Activated CD4-positive, alpha-beta T cell treated with anti-CD3 and anti-CD28 coated beads for 36 hours (primary cell): ENCODE measurements at regions of chr2 and their contacts with region 1.

Region 1: DNA sequence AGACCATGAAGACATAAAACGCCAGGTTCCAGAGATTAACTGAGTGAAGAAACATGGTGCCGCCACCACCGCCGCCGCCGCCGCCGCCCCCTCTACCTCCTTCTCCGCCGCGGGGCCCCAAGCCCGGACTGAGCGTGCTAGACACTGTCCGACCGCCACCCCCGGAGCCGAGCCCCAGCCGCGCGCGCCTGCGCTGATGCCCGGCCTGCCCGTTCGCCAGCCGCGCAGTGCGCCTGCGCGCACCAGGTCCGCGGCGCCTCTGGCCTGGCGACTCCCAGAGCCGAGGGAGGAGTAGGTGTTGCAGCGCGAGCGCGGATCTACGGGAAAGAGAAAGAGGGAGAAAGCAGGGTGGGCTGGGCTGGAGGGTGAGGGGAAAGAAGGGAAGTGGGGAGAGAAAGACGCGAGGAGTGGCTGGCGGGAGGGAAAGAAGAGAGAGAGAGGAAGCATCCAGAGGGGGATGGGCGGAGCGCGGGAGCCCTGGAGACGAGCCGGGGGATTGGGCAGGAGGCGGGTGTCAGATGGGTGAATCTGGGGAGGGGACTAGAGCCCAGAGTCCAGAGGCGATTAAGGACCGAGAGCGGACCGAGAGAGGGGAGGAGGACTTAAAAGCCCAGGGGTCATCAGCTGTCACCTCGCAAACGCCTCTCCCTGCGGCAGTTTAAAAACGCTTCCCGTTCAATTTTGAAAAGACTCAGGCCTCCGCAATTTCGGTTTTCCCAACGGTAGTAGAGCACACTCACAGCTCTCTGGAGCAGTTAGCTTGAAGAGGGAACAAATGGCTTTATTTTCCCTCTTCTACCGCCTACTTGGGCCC is at the start of gene PGAP1:
- DNase-seq: peak; percentile 94
- ATAC-seq: peak; percentile 80
- H3K4me3 Mint-ChIP-seq: peak within 1 kb of the TSS; percentile 92
- H3K27ac Mint-ChIP-seq: peak within 1 kb of the TSS; percentile 99
- H3K4me1 Mint-ChIP-seq: peaks cover 31% of the 10 kb centered on the region
- H3K27me3 Mint-ChIP-seq: no peaks in the 10 kb centered on the region
- total RNA-seq, gene PGAP1: 22.2 to 25.1 TPM

Region 2: DNA sequence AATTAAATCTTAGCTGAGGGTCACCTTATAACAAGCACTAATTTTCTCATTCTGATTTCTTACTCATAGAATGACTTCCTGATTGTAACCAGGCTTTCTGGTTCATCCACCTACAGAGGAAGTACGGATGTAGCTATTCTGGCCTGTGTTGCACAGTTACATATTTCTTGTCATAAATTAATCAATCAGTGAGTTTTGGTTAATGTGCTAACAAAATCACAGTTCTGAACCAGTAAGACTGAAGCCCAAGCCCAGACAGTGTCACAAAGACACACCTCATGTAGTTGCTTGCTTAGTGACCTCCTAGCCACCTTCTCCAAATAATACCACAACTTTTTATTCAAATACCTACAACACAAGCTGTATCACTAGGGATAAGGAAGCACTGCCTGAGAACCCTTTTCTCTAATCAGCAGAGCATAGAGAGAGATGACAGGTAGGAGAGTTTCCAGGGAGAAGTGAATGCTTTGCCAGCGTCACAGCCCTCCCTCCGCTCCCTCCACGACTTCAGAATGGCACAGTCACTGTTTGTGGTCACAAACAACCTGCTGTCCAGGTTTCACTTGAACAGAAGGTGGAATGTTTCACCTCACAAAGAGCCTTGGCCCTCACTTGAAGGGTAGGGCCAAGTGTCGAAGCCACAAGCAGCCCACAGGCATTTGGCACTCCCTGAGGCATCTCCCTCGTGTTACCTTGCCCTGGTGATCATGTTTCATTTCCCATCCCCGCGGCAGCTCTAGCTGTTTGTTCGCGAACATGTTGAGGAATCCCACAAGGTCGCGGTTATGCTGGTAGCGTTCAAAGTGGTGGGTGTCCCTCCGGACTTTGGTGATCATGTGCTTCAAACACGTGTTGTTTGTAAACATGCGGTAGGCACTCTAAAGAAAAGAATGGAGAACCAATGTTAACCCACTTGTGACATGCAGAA is 634.6 kb before region 1 on chr2:
- CTCF ChIA-PET with region 1: no interaction called
- POLR2A ChIA-PET with region 1: no interaction called
- intact Hi-C with region 1: loop called in 1 of 2 experiments (anchors 10 kb)
- DNase-seq: no peak
- ATAC-seq: peak; percentile 16
- H3K4me3 Mint-ChIP-seq: no peak overlapping the region
- H3K27ac Mint-ChIP-seq: peak overlapping the region; percentile 57
- H3K4me1 Mint-ChIP-seq: peaks cover 55% of the 10 kb centered on the region
- H3K27me3 Mint-ChIP-seq: no peaks in the 10 kb centered on the region

Region 3: DNA sequence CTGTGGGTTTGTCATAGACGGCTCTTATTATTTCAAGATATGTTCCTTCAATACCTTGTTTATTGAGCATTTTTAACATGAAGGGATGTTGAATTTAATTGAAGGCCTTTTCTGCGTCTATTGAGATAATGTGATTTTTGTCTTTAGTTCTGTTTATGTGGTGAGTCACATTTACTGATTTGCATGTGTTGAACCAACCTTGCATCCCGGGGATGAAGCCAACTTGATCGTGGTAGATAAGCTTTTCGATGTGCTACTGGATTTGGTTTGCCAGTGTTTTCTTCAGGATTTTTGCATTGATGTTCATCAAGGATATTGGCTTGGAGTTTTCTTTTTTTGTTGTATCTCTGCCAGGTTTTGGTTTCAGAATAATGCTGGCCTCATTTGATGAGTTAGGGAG is 187.7 kb before region 1 on chr2:
- CTCF ChIA-PET with region 1: no interaction called
- POLR2A ChIA-PET with region 1: no interaction called
- intact Hi-C with region 1: no loop called
- DNase-seq: no peak
- ATAC-seq: no peak
- H3K4me3 Mint-ChIP-seq: no peak overlapping the region
- H3K27ac Mint-ChIP-seq: no peak overlapping the region
- H3K4me1 Mint-ChIP-seq: no peaks in the 10 kb centered on the region
- H3K27me3 Mint-ChIP-seq: no peaks in the 10 kb centered on the region

Region 4: DNA sequence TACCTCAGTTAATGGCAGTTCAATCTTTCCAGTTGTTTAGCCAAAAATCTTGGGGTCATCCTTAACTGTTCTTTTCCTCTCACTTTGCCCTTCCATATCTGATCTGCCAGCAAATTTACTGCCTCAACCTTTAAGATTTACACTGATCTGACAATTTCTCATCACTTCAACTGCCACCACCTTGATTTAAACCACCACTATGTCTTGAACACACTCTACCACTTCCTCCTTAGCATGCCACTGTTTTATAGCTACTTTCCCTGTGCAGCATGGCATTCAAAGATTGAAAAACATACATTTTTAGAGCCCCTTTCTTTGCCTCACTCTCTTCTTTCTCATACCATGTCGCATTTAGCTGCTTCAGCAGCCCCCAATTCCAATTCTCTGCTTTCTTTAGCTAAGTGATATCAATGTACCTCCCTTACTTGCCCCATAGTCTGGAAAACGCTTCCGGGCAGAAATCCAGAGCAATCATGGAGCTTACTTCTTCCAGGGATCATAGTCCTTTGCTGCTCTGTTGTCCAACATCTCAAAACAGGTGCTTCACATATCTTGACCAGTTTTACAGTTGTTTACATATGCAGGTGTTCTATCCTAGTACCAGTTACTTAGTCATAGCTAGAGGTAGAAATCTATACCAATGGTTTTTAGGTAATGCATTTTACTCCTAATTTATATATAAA is 11.1 kb before region 1 on chr2:
- CTCF ChIA-PET with region 1: interaction called, 5 read pairs
- POLR2A ChIA-PET with region 1: interaction called, 4 read pairs
- intact Hi-C with region 1: loop called in 1 of 2 experiments (anchors 1 kb)
- DNase-seq: no peak
- ATAC-seq: peak; percentile 60
- H3K4me3 Mint-ChIP-seq: peak overlapping the region; percentile 15
- H3K27ac Mint-ChIP-seq: peak overlapping the region; percentile 98
- H3K4me1 Mint-ChIP-seq: peaks cover 38% of the 10 kb centered on the region
- H3K27me3 Mint-ChIP-seq: no peaks in the 10 kb centered on the region

Region 5: DNA sequence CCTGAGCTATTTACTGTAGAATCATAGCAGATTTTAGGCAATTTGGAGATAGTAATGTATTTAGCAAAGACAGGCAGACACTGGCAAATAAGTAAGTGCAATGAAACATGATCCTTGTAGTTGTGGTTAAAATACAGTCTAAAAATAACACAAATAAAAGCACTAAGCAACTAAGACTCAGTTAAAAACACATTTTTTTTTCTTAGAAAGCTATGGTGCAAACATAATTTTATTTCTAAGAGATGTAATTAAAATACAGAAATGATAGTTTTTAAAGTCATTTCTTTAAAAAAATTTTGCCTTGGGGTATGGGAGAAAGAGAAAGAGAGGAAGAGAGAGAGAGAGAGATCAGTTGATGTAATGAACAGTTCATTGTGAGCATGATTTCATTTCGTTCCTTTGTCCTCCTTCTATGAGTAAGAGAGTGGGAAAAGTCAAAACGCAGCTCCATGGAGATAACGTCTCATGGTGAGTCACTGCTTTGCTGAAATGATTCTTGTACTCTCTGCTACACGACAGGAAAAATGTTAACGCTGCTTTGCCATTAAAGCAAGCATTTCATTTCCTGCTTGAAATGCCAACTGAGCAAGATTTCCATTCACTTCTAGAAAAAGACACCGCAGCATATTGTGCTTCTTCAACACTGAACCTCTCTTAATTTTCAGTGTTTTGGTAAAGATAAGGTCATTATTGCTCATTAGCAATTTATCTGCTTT is 61.0 kb after region 1 on chr2:
- CTCF ChIA-PET with region 1: interaction called, 5 read pairs
- POLR2A ChIA-PET with region 1: interaction called, 15 read pairs
- intact Hi-C with region 1: loop called (anchors 1 kb)
- DNase-seq: peak; percentile 62
- ATAC-seq: peak; percentile 93
- H3K4me3 Mint-ChIP-seq: peak overlapping the region; percentile 38
- H3K27ac Mint-ChIP-seq: peak overlapping the region; percentile 98
- H3K4me1 Mint-ChIP-seq: peaks cover 65% of the 10 kb centered on the region
- H3K27me3 Mint-ChIP-seq: no peaks in the 10 kb centered on the region

Region 6: DNA sequence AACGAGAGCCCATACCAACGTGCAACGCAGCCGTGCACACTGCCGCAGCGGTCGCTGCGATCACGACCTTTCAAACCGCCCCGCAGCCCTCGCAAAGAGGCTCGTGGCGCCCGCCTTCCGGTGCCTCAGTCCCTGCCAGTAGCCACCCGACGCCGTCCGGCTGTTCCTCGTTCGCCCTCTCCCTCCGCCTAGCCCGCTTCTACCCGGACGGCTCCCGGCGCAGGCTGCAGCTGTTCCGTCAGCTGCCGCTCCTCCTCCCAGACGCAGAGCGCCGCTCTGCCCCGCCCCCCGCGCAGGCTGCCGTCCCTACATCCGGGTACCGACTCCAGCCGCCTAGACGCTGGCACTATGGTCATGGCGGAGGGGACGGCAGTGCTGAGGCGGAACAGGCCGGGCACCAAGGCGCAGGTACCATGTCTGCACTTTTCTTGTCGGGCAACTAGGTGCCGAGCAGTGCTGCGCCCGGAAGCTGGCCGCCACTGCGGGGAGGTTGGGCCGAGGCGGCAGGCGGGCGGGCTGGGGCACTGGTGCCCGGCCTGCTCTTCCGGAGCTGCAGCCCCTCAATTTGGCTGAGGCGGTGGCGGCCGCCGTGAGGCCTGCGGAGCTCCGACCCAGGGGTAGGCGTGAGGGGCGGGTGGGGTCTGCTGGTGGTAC is 589.1 kb after region 1 on chr2 and contains the start of gene MOB4:
- CTCF ChIA-PET with region 1: no interaction called
- POLR2A ChIA-PET with region 1: no interaction called
- intact Hi-C with region 1: loop called in 1 of 2 experiments (anchors 5 kb)
- DNase-seq: peak; percentile 97
- ATAC-seq: peak; percentile 95
- H3K4me3 Mint-ChIP-seq: peak within 1 kb of the TSS; percentile 94
- H3K27ac Mint-ChIP-seq: peak within 1 kb of the TSS; percentile 96
- H3K4me1 Mint-ChIP-seq: peaks cover 21% of the 10 kb centered on the region
- H3K27me3 Mint-ChIP-seq: no peaks in the 10 kb centered on the region
- total RNA-seq, gene MOB4: 10.8 to 17.1 TPM